ENCODE measurements at regions of chr6 and their contacts with region 1.

Region 1: DNA sequence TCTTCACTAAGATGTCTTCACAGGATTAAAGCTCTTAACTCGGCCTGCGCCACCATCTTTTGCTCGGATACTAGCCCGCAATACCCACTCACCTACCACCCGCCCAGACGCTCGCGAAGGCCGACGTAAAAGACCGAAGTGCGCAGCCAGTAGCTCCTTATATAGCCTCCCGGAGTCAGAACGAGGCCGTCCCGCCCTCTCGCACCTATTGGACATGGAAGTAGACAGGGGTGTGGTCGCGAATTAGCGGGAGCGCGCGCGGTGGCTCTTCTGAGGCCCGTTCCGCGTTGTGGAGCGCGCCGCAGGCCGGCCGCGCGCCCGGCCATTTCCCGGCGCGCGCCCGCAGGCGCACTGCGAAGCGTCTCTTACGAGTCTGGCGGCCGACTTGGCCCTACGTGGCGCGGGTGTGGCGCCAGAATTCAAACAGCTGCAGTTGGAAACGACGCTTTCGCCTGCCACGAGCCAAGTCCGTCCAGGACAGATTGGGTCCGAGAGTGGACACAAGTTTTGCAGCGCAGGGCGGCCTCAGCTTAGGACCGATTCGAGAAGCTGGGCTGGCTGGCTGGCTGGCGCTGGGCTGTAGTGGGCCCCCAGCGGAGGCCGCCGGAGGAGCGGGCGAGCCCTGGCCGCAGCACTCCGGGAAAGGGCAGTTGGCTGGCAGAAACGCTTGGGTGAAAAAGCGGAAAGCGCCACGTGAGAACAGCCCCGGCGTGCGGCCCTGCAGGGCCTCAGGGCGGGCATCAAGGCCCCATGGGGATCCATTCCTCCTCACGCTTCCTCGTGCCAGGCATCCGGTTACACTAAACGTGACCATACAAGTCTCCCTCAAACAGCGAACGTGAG is 36.1 kb upstream of the SYNCRIP start:
- DNase-seq: peak; percentile 93
- ATAC-seq: peak; percentile 81
- H3K4me3 ChIP-seq: peak overlapping the region; percentile 89
- H3K27ac ChIP-seq: peak overlapping the region; percentile 92
- H3K4me1 ChIP-seq: peaks cover 13% of the 10 kb centered on the region
- H3K27me3 ChIP-seq: no peaks in the 10 kb centered on the region
- CTCF ChIP-seq: no peak
- EP300 ChIP-seq: no peak
- POLR2A ChIP-seq: peak; percentile 100
- RAD21 ChIP-seq: peak; percentile 19; the same call in 1 of the 2 replicates

Region 2: DNA sequence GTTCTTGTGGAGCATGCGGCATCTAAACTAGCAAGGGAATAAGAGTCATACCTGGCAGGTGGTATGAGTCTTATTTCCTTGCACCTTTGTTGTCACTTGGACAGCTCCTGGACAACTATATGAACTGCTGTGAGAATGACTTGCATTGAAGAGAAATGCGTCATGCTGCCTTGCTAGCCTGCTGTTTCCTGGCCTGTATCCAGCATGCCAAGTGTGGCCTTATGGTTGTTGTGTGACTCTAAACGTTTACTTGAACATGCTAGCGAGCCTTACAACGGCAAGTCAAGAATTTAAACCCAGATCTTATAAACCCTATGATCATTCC is 1541.8 kb before region 1 on chr6:
- CTCF ChIA-PET with region 1: no interaction called
- POLR2A ChIA-PET with region 1: no interaction called
- RAD21 ChIA-PET with region 1: no interaction called
- SMC1A ChIA-PET with region 1: no interaction called
- in situ Hi-C with region 1: no loop called
- intact Hi-C with region 1: no loop called
- DNase-seq: no peak
- ATAC-seq: no peak
- H3K4me3 ChIP-seq: no peak overlapping the region
- H3K27ac ChIP-seq: no peak overlapping the region
- H3K4me1 ChIP-seq: no peaks in the 10 kb centered on the region
- H3K27me3 ChIP-seq: no peaks in the 10 kb centered on the region
- CTCF ChIP-seq: no peak
- EP300 ChIP-seq: no peak
- POLR2A ChIP-seq: no peak
- RAD21 ChIP-seq: no peak

Region 3: DNA sequence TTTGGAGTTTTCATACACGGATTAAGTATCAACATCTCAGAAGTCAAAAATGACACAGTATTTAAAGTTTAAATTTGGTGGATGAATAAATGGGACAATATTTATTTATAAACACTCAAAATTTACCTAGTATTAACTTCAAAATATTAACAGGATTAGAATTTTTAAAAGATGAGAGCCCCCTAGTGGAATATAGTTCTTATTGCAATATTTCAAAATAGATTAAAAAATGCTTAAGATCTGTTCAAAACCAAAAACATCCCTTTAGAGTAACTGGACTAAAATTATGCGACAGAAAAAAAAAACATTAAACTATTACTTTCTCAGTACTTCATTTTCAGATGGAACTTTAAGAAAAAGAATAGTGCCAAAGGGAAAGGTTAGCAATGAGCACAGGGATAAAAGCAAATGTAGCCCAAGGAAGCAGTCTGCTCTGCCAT is 141.7 kb before region 1 on chr6:
- CTCF ChIA-PET with region 1: interaction called, 22 read pairs
- POLR2A ChIA-PET with region 1: interaction called, 4 read pairs
- RAD21 ChIA-PET with region 1: interaction called, 8 read pairs
- SMC1A ChIA-PET with region 1: interaction called, 8 read pairs
- in situ Hi-C with region 1: no loop called
- intact Hi-C with region 1: no loop called
- DNase-seq: no peak
- ATAC-seq: no peak
- H3K4me3 ChIP-seq: no peak overlapping the region
- H3K27ac ChIP-seq: no peak overlapping the region
- H3K4me1 ChIP-seq: no peaks in the 10 kb centered on the region
- H3K27me3 ChIP-seq: no peaks in the 10 kb centered on the region
- CTCF ChIP-seq: peak in 2 of 3 experiments; percentile 25 to 38; a peak in 3 of 6 replicates
- EP300 ChIP-seq: no peak
- POLR2A ChIP-seq: no peak
- RAD21 ChIP-seq: peak; percentile 1; the same call in 1 of the 2 replicates

Region 4: DNA sequence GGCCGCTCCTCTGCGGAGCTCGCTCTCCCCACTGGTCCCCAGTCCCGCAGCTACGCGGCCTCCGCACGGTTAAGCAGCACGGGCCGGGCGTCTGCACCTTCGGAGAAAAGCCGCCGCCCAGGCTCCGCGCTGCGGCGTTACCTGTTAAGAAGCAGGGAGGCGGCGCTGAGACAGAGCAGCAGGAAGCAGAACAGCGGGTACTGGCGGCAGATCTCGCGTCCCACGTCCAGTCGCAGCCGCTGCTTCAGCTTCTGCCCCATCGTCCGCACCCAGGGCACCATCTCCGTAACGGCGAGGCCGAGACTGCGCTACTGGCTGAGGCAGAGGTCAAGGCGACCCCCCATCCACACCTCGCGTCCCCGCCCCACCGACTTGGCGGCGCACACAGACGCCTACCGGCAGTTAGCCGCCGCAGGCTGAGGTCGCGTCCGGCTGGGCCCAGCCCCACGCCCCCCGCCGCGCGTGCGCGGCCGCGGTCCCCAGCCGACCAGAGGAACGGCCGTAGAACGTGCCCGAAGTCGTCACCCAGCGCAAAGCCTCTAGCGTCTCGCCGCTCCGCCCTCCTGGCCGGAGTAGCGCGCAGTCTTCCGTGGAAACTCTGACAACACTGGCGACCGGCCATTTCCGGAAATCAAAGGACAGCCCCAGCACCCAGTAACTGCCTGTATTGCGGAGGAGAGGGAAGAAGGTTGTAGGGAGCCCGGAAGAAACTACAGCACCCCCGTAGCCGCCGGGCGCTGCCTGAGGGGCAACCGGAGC is 85.2 kb before region 1 on chr6 and contains the start of gene SNX14:
- CTCF ChIA-PET with region 1: interaction called, 8 read pairs
- POLR2A ChIA-PET with region 1: interaction called, 19 read pairs
- RAD21 ChIA-PET with region 1: interaction called, 20 read pairs
- SMC1A ChIA-PET with region 1: interaction called, 9 read pairs
- in situ Hi-C with region 1: no loop called
- intact Hi-C with region 1: loop called (anchors 2 kb)
- DNase-seq: peak; percentile 86
- ATAC-seq: peak; percentile 92
- H3K4me3 ChIP-seq: peak within 1 kb of the TSS; percentile 95
- H3K27ac ChIP-seq: peak within 1 kb of the TSS; percentile 67
- H3K4me1 ChIP-seq: no peaks in the 10 kb centered on the region
- H3K27me3 ChIP-seq: no peaks in the 10 kb centered on the region
- CTCF ChIP-seq: 0 out of 6 replicates have a peak, but pooled peaks of 1 of the 3 experiments have one; percentile 8
- EP300 ChIP-seq: 0 out of 4 replicates have a peak, but pooled peaks of 1 of the 2 experiments have one; percentile 8
- POLR2A ChIP-seq: peak; percentile 96
- RAD21 ChIP-seq: no peak
- polyA plus RNA-seq, gene SNX14: 34.2 to 50.9 TPM

Region 5: DNA sequence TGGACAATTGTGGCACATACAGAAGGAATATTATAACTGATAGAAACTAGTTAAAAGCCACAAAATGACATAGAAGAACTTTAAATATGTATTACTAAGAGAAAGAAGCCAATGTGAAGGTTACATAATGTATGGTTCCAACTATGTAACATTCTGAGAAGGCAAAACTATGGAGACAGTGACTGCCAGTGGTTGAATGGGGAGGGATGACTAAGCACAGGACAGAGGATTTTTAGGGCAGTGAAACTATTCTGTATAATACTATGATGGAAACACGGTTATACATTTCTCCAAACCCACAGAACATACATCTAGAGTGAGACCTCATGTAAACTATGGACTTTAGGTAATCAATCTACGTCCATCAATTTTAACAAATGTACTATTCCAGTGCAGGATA is 58.5 kb before region 1 on chr6:
- CTCF ChIA-PET with region 1: no interaction called
- POLR2A ChIA-PET with region 1: no interaction called
- RAD21 ChIA-PET with region 1: no interaction called
- SMC1A ChIA-PET with region 1: interaction called, 3 read pairs
- in situ Hi-C with region 1: loop called (anchors 10 kb)
- intact Hi-C with region 1: loop called (anchors 10 kb)
- DNase-seq: no peak
- ATAC-seq: no peak; the same call in 1 of the 3 replicates
- H3K4me3 ChIP-seq: no peak overlapping the region
- H3K27ac ChIP-seq: no peak overlapping the region
- H3K4me1 ChIP-seq: no peaks in the 10 kb centered on the region
- H3K27me3 ChIP-seq: no peaks in the 10 kb centered on the region
- CTCF ChIP-seq: no peak
- EP300 ChIP-seq: no peak
- POLR2A ChIP-seq: no peak
- RAD21 ChIP-seq: no peak

Region 6: GRCh38 chr6:87154993-87155841 is 1476.4 kb after region 1 on chr6 and contains the start of gene ZNF292:
- CTCF ChIA-PET with region 1: no interaction called
- POLR2A ChIA-PET with region 1: no interaction called
- RAD21 ChIA-PET with region 1: no interaction called
- SMC1A ChIA-PET with region 1: no interaction called
- in situ Hi-C with region 1: no loop called
- intact Hi-C with region 1: loop called (anchors 10 kb)
- DNase-seq: peak; percentile 96
- ATAC-seq: peak; percentile 85
- H3K4me3 ChIP-seq: peak within 1 kb of the TSS; percentile 96
- H3K27ac ChIP-seq: peak within 1 kb of the TSS; percentile 92
- H3K4me1 ChIP-seq: peaks cover 3% of the 10 kb centered on the region; the same call in 1 of the 2 replicates
- H3K27me3 ChIP-seq: no peaks in the 10 kb centered on the region
- CTCF ChIP-seq: no peak; a peak in 2 of 6 replicates
- EP300 ChIP-seq: peak in 1 of 2 experiments; percentile 73; a peak in 2 of 4 replicates
- POLR2A ChIP-seq: peak; percentile 94
- RAD21 ChIP-seq: peak; percentile 25; the same call in 1 of the 2 replicates
- polyA plus RNA-seq, gene ZNF292: 11.1 to 20.9 TPM